ENCODE measurements at regions of chr15 and their contacts with region 1.

Region 1: GRCh38 chr15:66700802-66701421 is 1.1 kb upstream of the SMAD6 start:
- DNase-seq: peak; percentile 99
- H3K4me3 Mint-ChIP-seq: peak overlapping the region; percentile 98
- H3K27ac Mint-ChIP-seq: no peak overlapping the region
- H3K4me1 Mint-ChIP-seq: peaks cover 28% of the 10 kb centered on the region
- H3K27me3 Mint-ChIP-seq: no peaks in the 10 kb centered on the region
- CTCF ChIP-seq: no peak

Region 2: GRCh38 chr15:66433726-66434125 is 267.2 kb before region 1 on chr15:
- CTCF ChIA-PET with region 1: no interaction called
- intact Hi-C with region 1: no loop called
- DNase-seq: no peak
- H3K4me3 Mint-ChIP-seq: no peak overlapping the region
- H3K27ac Mint-ChIP-seq: no peak overlapping the region
- H3K4me1 Mint-ChIP-seq: no peaks in the 10 kb centered on the region
- H3K27me3 Mint-ChIP-seq: no peaks in the 10 kb centered on the region
- CTCF ChIP-seq: no peak

Region 3: DNA sequence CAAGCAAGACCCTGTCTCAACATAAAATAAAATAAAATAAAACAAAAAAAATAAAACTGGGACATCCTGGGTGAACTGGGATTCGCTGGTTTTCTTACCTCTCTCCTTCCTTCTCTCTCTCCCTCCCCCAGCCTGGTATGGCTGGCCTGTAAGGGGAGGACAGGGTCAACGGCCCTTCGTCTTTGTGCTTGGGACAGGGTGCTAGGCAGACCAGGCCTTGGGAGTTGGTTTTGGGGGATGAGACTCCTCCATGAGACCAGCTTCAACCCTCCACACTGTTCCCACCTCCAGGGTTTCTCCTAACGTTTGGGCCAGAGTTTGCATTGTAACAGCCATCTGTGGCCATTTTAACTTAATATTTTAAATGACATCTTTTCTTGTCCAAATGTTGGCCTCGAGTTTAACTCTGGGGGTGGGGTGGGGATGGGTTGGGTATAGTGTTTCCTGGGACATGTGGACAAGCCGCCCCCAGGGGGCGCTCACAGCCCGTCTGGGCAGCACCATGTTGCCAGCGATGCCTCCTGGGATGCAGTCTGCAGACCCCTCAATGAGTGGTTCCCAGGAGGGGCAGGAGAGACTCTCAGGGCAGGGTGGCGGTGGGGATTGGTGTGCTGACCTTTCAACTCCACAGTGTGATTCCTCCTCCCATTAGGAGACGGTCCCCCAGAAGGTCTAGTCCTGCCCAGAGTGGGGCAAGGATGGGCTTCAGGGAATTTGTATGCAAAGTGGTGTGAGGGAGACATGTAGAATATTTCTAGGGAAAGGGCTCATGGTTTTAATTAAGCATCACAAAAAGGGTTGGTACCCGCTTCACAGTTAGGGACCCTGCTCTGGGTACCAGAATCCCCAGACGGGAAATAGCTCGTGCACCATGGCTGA is 97.4 kb before region 1 on chr15:
- CTCF ChIA-PET with region 1: interaction called, 3 read pairs
- intact Hi-C with region 1: loop called (anchors 1 kb)
- DNase-seq: peak; percentile 82
- H3K4me3 Mint-ChIP-seq: no peak overlapping the region
- H3K27ac Mint-ChIP-seq: no peak overlapping the region
- H3K4me1 Mint-ChIP-seq: no peaks in the 10 kb centered on the region
- H3K27me3 Mint-ChIP-seq: peaks cover 34% of the 10 kb centered on the region
- CTCF ChIP-seq: peak; percentile 90

Region 4: DNA sequence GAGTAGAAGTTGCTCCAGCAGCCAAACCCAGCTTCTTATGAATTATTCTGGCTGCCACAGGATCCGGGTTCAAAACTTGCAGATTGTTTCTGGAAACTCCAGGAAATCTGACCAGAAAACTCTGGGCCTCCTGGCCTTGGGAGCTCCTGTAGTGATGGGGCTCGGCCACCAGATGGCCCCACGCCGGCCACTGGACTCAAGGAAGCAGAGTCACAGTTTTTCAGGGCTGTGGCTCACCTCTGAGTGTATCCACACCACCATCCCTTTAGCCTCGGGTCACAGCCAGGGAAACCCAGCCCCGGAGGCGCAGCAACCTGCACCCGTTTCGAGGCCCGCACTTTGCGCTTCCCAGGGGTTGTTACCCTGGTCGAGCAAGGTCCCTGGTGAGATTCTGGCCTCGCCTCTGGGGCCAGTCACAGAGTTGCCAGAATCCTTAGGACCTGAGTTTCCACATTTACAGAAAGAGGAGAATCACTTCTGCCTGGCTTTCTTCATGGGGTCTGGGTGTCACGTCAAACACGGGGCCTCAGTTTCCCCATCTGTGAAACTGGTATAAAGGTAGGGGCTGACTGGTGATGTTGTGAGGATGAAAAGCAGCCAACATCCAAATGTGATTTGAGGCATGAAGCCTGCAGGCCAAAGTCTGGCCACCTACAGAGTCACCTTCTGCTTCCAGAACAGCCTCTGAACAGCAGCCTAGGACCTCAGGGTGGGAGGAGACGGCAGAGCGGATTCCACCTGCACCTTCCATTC is 81.6 kb before region 1 on chr15:
- CTCF ChIA-PET with region 1: interaction called, 14 read pairs
- intact Hi-C with region 1: loop called (anchors 5 kb)
- DNase-seq: peak; percentile 92
- H3K4me3 Mint-ChIP-seq: no peak overlapping the region
- H3K27ac Mint-ChIP-seq: no peak overlapping the region
- H3K4me1 Mint-ChIP-seq: peaks cover 30% of the 10 kb centered on the region
- H3K27me3 Mint-ChIP-seq: peaks cover 32% of the 10 kb centered on the region
- CTCF ChIP-seq: peak; percentile 78

Measured in Calu3 (cell line).